ENCODE measurements at regions of chr11 and their contacts with region 1.

Region 1: GRCh38 chr11:66834501-66834845 is 8.8 kb upstream of the RCE1 start:
- DNase-seq: no peak
- H3K4me3 ChIP-seq: no peak overlapping the region
- H3K27ac ChIP-seq: no peak overlapping the region
- H3K4me1 ChIP-seq: no peaks in the 10 kb centered on the region
- H3K27me3 ChIP-seq: no peaks in the 10 kb centered on the region
- CTCF ChIP-seq: no peak
- EP300 ChIP-seq: no peak
- POLR2A ChIP-seq: no peak
- RAD21 ChIP-seq: no peak

Region 2: GRCh38 chr11:66686801-66687750 is 147.4 kb before region 1 on chr11:
- CTCF ChIA-PET with region 1: interaction called, 90 read pairs
- POLR2A ChIA-PET with region 1: no interaction called
- DNase-seq: no peak
- H3K4me3 ChIP-seq: no peak overlapping the region
- H3K27ac ChIP-seq: no peak overlapping the region
- H3K4me1 ChIP-seq: no peaks in the 10 kb centered on the region
- H3K27me3 ChIP-seq: no peaks in the 10 kb centered on the region
- CTCF ChIP-seq: no peak
- EP300 ChIP-seq: no peak
- POLR2A ChIP-seq: no peak
- RAD21 ChIP-seq: no peak

Region 3: GRCh38 chr11:66694732-66695207 is 139.7 kb before region 1 on chr11:
- CTCF ChIA-PET with region 1: interaction called, 90 read pairs
- POLR2A ChIA-PET with region 1: no interaction called
- DNase-seq: peak; percentile 87 to 95
- H3K4me3 ChIP-seq: no peak overlapping the region
- H3K27ac ChIP-seq: 0 out of 2 replicates have a peak overlapping the region, but pooled peaks have one; percentile 30
- H3K4me1 ChIP-seq: peaks cover 0 to 3% (median 1%) of the 10 kb centered on the region in 4 experiments; a peak in 2 of 7 replicates
- H3K27me3 ChIP-seq: no peaks in the 10 kb centered on the region
- CTCF ChIP-seq: peak; percentile 77 to 100 (median 97)
- EP300 ChIP-seq: no peak
- POLR2A ChIP-seq: no peak
- RAD21 ChIP-seq: peak; percentile 92 to 94

Measured in H1 (cell line).